ENCODE measurements at regions of chrX and their contacts with region 1.

Region 1: GRCh38 chrX:153667956-153668396 is 5.6 kb downstream of the PNCK start:
- DNase-seq: peak; percentile 88 to 94
- ATAC-seq: peak; percentile 77
- H3K4me3 ChIP-seq: no peak overlapping the region
- H3K27ac ChIP-seq: no peak overlapping the region
- H3K4me1 ChIP-seq: no peaks in the 10 kb centered on the region
- H3K27me3 ChIP-seq: no peaks in the 10 kb centered on the region

Region 2: DNA sequence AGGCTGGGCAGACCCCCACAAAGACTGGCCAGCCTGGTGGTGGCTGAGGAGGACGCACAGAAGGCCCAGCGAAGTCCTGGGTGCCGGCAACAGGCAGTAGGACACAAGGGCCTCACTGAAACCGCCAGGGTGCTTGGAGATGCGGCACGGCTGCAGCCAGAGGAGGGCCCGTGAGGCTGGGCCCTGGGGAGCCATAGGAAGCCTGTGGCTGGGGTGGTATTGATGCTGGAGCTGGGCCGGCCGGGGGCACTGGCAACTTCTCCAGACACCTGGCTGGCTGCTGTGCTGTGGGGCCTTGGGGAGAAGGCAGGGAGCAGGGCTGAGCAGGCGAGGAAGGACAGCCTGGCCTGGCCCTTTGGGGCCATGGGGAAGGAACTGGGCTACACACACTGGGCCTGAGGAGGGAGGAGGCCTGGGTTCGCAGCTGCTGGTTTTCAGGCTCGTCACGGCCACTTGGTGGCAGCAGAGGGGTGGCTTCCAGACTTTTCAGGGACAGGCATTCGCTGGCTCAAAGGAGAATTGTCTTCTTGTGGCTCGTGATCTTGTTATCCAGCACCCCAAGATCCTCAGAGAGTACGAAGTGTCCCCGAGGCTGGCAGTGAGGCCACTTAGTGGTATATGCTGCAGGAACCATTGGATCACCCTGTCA is 113.3 kb before region 1 on chrX:
- intact Hi-C with region 1: loop called (anchors 2 to 5 kb)
- DNase-seq: peak; percentile 82 to 87
- ATAC-seq: peak; percentile 53
- H3K4me3 ChIP-seq: no peak overlapping the region
- H3K27ac ChIP-seq: no peak overlapping the region
- H3K4me1 ChIP-seq: no peaks in the 10 kb centered on the region
- H3K27me3 ChIP-seq: no peaks in the 10 kb centered on the region

Region 3: GRCh38 chrX:153609917-153610428 is 58.0 kb before region 1 on chrX:
- intact Hi-C with region 1: loop called in 1 of 2 experiments (anchors 5 kb)
- DNase-seq: peak; percentile 83 to 91
- ATAC-seq: peak; percentile 90
- H3K4me3 ChIP-seq: peak overlapping the region in 1 of 2 donors; percentile 26
- H3K27ac ChIP-seq: no peak overlapping the region
- H3K4me1 ChIP-seq: no peaks in the 10 kb centered on the region
- H3K27me3 ChIP-seq: no peaks in the 10 kb centered on the region

Region 4: GRCh38 chrX:153768311-153769157 is 100.6 kb after region 1 on chrX:
- intact Hi-C with region 1: no loop called
- DNase-seq: peak; percentile 44 to 73
- ATAC-seq: no peak
- H3K4me3 ChIP-seq: no peak overlapping the region
- H3K27ac ChIP-seq: no peak overlapping the region
- H3K4me1 ChIP-seq: no peaks in the 10 kb centered on the region
- H3K27me3 ChIP-seq: no peaks in the 10 kb centered on the region

Measured in aorta (tissue), 5 donors.